Common myeloid progenitor, CD34-positive (primary cell): ENCODE measurements at regions of chr13 and their contacts with region 1.

Region 1: GRCh38 chr13:114174529-114174961 is 4.5 kb upstream of the CFAP97D2 start:
- DNase-seq: peak in 2 of 3 donors; percentile 46 to 59
- H3K4me3 ChIP-seq: no peak overlapping the region
- H3K27ac ChIP-seq: no peak overlapping the region
- H3K4me1 ChIP-seq: no peaks in the 10 kb centered on the region
- H3K27me3 ChIP-seq: no peaks in the 10 kb centered on the region

Region 2: GRCh38 chr13:114185182-114185971 is 10.8 kb after region 1 on chr13:
- CTCF ChIA-PET with region 1: interaction called, 14 read pairs
- POLR2A ChIA-PET with region 1: no interaction called
- DNase-seq: no peak
- H3K4me3 ChIP-seq: no peak overlapping the region
- H3K27ac ChIP-seq: no peak overlapping the region
- H3K4me1 ChIP-seq: no peaks in the 10 kb centered on the region
- H3K27me3 ChIP-seq: no peaks in the 10 kb centered on the region